HCT116 (cell line): ENCODE measurements at regions of chr14 and their contacts with region 1.

Region 1: DNA sequence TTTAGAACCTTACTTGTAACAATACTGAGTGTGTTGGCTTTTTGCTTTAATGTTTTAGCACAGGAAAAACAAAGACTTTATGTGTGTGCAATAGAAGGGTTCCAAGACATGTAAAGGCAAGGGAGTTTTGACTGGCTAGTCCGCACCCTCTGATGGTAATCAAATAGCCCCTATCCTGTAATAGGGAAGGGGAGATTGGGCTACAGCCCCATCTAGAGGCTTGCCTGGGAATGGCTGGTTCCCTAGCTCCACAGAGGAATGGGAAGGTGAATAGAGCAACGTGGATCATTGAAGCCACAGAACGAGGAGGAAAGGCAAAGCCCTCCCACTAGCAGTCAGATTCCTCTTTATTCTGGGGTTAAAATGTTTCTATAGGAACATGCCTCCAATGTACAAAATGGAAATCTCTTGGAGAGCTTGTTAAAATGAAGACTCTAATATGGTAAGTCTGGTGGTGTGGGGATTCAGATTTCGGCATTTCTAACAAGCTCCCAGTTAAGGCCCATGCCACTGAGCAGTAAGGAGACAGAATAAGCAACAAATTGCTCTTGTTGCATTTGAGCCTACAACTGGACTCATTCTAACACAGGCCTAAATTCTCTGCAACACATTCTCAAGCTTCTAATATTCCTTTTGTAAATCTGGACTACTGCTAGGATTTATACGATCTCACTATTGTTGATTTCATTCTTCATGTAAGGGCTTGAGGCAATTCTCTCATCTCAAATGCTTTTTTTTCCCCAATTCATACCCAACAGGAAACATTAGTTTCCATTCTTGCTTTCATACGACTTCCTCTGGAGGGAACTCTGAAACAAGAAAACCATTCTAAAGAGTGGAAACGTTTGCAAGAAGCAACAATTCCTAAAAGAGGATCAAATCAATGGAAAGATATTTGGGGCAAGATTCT is 57.1 kb downstream of the NIN start:
- DNase-seq: no peak
- ATAC-seq: peak; percentile 90
- H3K4me3 ChIP-seq: no peak overlapping the region
- H3K27ac ChIP-seq: no peak overlapping the region
- H3K4me1 ChIP-seq: peaks cover 3 to 12% of the 10 kb centered on the region in 2 experiments; a peak in 3 of 4 replicates
- H3K27me3 ChIP-seq: no peaks in the 10 kb centered on the region
- CTCF ChIP-seq: peak; percentile 79 to 96 (median 94); a peak in 5 of 6 replicates
- POLR2A ChIP-seq: no peak
- RAD21 ChIP-seq: peak; percentile 89

Region 2: DNA sequence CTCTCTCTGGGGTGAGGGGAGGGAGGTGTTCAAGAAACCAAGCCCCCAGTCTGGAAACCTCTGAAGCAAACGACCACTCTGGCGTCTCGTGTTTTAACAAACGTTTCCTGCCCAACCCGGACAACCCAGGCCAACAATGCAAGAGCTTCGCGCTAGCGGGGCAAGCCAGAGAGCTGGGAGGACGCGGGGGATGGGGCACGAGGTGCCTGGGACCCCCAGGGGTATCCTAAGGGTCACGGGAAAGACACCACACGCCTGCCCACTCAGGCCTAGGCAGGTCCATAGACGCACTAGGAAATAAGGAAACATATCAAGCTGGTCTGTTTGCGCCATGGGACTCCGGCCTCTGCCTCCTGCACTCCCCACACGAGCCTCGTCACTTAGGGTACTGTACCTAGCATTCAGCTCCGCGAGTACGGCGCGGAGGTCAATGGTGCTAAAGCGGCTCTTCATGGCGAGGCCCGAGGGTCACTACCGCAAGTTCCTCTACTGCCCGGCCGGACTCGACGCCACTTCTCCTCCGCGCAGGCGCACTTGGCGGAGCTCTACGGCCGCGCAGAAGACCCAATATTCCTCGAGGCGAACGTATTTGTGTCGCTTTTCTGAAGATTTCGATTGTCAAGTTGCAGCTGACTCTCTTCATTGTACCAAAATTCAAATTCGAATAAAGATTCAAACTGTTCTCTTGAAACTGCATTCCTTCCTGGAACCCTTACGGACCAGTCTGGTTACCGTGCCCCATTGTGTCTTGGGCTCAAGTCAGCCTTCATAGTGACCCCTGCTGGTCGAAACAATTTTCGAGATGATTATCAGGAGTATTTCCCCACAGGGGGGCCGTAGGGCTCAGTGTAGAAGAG is 921.4 kb before region 1 on chr14 and contains the start of gene NEMF:
- CTCF ChIA-PET with region 1: no interaction called
- POLR2A ChIA-PET with region 1: no interaction called
- RAD21 ChIA-PET with region 1: no interaction called
- intact Hi-C with region 1: loop called (anchors 10 kb)
- DNase-seq: peak; percentile 90
- ATAC-seq: peak; percentile 75
- H3K4me3 ChIP-seq: peak within 1 kb of the TSS; percentile 82 to 89
- H3K27ac ChIP-seq: peak within 1 kb of the TSS; percentile 66
- H3K4me1 ChIP-seq: peaks cover 7 to 22% of the 10 kb centered on the region in 2 experiments
- H3K27me3 ChIP-seq: no peaks in the 10 kb centered on the region
- CTCF ChIP-seq: peak; percentile 76 to 95 (median 91)
- POLR2A ChIP-seq: no peak
- RAD21 ChIP-seq: peak; percentile 42; the same call in 1 of the 2 replicates
- total RNA-seq, gene NEMF: 57.7 TPM

Region 3: GRCh38 chr14:50542941-50543418 is 230.9 kb before region 1 on chr14:
- CTCF ChIA-PET with region 1: interaction called, 15 read pairs
- POLR2A ChIA-PET with region 1: no interaction called
- RAD21 ChIA-PET with region 1: no interaction called
- intact Hi-C with region 1: loop called (anchors 1 kb)
- DNase-seq: peak; percentile 51
- ATAC-seq: peak; percentile 96
- H3K4me3 ChIP-seq: no peak overlapping the region
- H3K27ac ChIP-seq: no peak overlapping the region
- H3K4me1 ChIP-seq: peaks cover 10 to 13% of the 10 kb centered on the region in 2 experiments
- H3K27me3 ChIP-seq: no peaks in the 10 kb centered on the region
- CTCF ChIP-seq: peak; percentile 48 to 64 (median 57); a peak in 5 of 6 replicates
- POLR2A ChIP-seq: no peak
- RAD21 ChIP-seq: peak; percentile 64

Region 4: DNA sequence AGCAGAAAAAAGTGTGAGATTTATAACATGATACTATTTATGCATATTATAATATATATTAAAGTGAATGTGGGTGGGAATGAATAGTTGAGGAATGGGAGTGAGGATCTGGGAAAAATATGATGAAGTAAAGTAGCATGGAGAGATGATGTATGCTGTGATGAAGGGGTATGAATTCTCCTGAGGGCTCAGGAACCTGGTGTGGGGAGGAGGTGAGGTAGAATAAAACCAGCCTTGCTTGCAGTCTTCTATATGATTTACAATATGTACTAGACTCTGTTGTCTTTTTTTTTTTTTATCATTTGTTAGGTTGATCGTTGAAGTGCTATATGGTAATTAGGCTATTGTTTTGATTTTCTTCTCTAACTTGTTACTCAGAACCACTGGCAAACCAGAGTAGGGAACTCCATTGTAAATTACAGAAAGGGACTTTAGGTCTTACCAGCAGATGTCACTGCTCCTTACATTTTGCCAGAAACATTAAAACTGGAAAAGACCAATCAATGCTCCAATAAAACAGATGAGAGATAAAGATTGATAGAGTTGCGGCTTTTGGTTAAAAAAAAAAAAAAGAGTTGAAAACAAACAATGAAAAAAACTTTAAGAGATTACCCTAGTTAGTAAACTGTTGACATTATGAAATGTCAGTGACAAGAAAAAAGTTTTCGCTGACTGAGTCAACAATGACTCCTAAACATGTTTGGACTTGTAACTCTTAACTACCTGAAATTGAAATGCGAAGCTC is 174.0 kb before region 1 on chr14:
- CTCF ChIA-PET with region 1: interaction called, 33 read pairs
- POLR2A ChIA-PET with region 1: no interaction called
- RAD21 ChIA-PET with region 1: interaction called, 5 to 8 read pairs
- intact Hi-C with region 1: loop called (anchors 1 kb)
- DNase-seq: peak; percentile 38
- ATAC-seq: peak; percentile 78
- H3K4me3 ChIP-seq: 0 out of 4 replicates have a peak overlapping the region, but pooled peaks of 1 of the 2 experiments have one; percentile 4
- H3K27ac ChIP-seq: peak overlapping the region; percentile 45; the same call in 1 of the 2 replicates
- H3K4me1 ChIP-seq: peaks cover 16 to 19% of the 10 kb centered on the region in 2 experiments
- H3K27me3 ChIP-seq: no peaks in the 10 kb centered on the region
- CTCF ChIP-seq: peak; percentile 61 to 79 (median 68); a peak in 5 of 6 replicates
- POLR2A ChIP-seq: no peak
- RAD21 ChIP-seq: peak; percentile 74

Region 5: DNA sequence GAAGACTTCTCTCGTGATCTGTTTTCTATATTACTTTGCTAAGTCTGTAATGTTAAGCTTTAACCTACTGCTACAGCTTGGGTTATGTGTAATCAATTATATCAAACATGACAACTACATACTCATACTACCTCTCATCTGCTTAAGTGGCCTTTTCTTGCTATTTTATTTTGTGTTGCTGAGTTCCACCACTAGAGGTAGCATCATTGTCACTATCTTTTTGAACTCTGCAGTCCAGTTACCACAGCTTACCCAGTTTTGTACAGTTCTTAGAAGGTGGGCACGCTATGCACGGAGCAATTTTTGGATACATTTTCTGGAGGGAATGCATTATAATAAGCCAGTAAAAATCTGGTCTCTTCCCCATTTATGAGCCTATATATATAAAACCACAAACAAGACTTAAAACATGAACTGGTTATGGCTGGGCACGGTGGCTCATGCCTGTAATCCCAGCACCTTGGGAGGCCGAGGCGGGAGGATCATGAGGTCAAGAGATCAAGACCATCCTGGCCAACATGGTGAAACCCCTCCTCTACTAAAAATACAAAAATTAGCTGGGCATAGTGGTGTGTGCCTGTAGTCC is 154.2 kb before region 1 on chr14:
- CTCF ChIA-PET with region 1: interaction called, 6 read pairs
- POLR2A ChIA-PET with region 1: no interaction called
- RAD21 ChIA-PET with region 1: no interaction called
- intact Hi-C with region 1: loop called (anchors 5 kb)
- DNase-seq: peak; percentile 32
- ATAC-seq: peak; percentile 87
- H3K4me3 ChIP-seq: no peak overlapping the region
- H3K27ac ChIP-seq: no peak overlapping the region
- H3K4me1 ChIP-seq: peaks cover 3 to 5% of the 10 kb centered on the region in 2 experiments; a peak in 3 of 4 replicates
- H3K27me3 ChIP-seq: no peaks in the 10 kb centered on the region
- CTCF ChIP-seq: peak; percentile 47 to 70 (median 67); a peak in 5 of 6 replicates
- POLR2A ChIP-seq: no peak
- RAD21 ChIP-seq: peak; percentile 61

Region 6: GRCh38 chr14:50762001-50762930 is 11.6 kb before region 1 on chr14:
- CTCF ChIA-PET with region 1: interaction called, 16 read pairs
- POLR2A ChIA-PET with region 1: no interaction called
- RAD21 ChIA-PET with region 1: no interaction called
- intact Hi-C with region 1: no loop called
- DNase-seq: no peak
- ATAC-seq: no peak
- H3K4me3 ChIP-seq: no peak overlapping the region
- H3K27ac ChIP-seq: no peak overlapping the region
- H3K4me1 ChIP-seq: no peaks in the 10 kb centered on the region
- H3K27me3 ChIP-seq: no peaks in the 10 kb centered on the region
- CTCF ChIP-seq: no peak
- POLR2A ChIP-seq: no peak
- RAD21 ChIP-seq: no peak

Region 7: GRCh38 chr14:50860478-50861086 is 86.7 kb after region 1 on chr14:
- CTCF ChIA-PET with region 1: interaction called, 27 read pairs
- POLR2A ChIA-PET with region 1: no interaction called
- RAD21 ChIA-PET with region 1: interaction called in 1 of 2 experiments, 3 read pairs
- intact Hi-C with region 1: no loop called
- DNase-seq: peak; percentile 71
- ATAC-seq: peak; percentile 73
- H3K4me3 ChIP-seq: peak overlapping the region; percentile 32 to 51
- H3K27ac ChIP-seq: no peak overlapping the region
- H3K4me1 ChIP-seq: peaks cover 7 to 12% of the 10 kb centered on the region in 2 experiments
- H3K27me3 ChIP-seq: peaks cover 5% of the 10 kb centered on the region; the same call in 1 of the 2 replicates
- CTCF ChIP-seq: peak; percentile 55 to 68 (median 58); a peak in 5 of 6 replicates
- POLR2A ChIP-seq: no peak
- RAD21 ChIP-seq: peak; percentile 67